ENCODE measurements at regions of chr13 and their contacts with region 1.

Region 1: DNA sequence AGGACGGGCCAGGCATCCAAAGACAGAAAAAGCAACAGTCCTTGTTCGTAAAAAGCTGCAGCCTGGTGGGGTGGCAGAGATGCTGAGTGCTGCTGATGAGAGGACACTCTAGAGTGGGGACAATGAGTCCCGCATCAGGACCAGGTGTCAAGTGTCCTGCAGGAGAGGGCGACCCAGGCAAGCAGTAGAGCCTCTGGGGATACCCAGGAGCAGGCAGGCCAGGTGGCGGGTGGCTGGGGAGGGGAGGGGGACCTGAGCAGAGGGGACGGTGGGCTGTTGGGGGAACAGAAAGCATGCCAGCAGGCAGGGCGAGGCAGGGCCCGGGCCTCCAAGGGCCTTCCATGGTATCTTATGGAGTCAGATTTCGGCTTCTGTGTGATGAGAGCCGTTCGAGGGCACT is 35.8 kb downstream of the GGACT start:
- DNase-seq: peak; percentile 19 to 54
- H3K4me3 ChIP-seq: no peak overlapping the region
- H3K27ac ChIP-seq: no peak overlapping the region
- H3K4me1 ChIP-seq: peaks cover 26% of the 10 kb centered on the region
- H3K27me3 ChIP-seq: no peaks in the 10 kb centered on the region
- CTCF ChIP-seq: no peak
- POLR2A ChIP-seq: no peak

Region 2: GRCh38 chr13:100666124-100666523 is 113.4 kb after region 1 on chr13:
- intact Hi-C with region 1: loop called (anchors 10 kb)
- DNase-seq: peak in 1 of 2 donors; percentile 47
- H3K4me3 ChIP-seq: no peak overlapping the region
- H3K27ac ChIP-seq: no peak overlapping the region
- H3K4me1 ChIP-seq: no peaks in the 10 kb centered on the region
- H3K27me3 ChIP-seq: no peaks in the 10 kb centered on the region
- CTCF ChIP-seq: no peak
- POLR2A ChIP-seq: no peak

Measured in vagina (tissue), 2 donors.